Gastrocnemius medialis (tissue), 4 donors: ENCODE measurements at regions of chr5 and their contacts with region 1.

Region 1: DNA sequence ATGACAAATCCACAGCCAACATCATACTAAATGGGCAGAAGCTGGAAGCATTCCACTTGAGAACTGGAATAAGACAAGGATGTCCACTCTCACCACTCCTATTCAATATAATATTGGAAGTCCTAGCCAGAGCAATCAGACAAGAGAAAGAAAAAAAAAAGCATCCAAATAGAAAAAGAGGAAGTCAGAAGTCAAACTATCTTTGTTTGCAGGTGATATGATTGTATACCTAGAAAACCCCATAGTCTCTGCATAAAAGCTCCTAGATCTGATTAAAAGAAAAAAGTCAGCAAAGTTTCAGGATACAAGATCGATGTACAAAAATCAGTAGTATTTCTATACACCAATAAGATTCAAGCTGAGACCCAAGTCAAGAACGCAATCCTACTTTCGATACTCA is 66.1 kb downstream of the OSMR start:
- DNase-seq: no peak
- ATAC-seq: no peak
- H3K4me3 ChIP-seq: no peak overlapping the region
- H3K27ac ChIP-seq: no peak overlapping the region
- H3K4me1 ChIP-seq: no peaks in the 10 kb centered on the region
- H3K27me3 ChIP-seq: no peaks in the 10 kb centered on the region
- CTCF ChIP-seq: no peak
- POLR2A ChIP-seq: no peak

Region 2: GRCh38 chr5:38889424-38889823 is 22.5 kb before region 1 on chr5:
- in situ Hi-C with region 1: no loop called
- intact Hi-C with region 1: loop called (anchors 1 kb)
- DNase-seq: no peak
- ATAC-seq: no peak
- H3K4me3 ChIP-seq: no peak overlapping the region
- H3K27ac ChIP-seq: no peak overlapping the region
- H3K4me1 ChIP-seq: no peaks in the 10 kb centered on the region
- H3K27me3 ChIP-seq: no peaks in the 10 kb centered on the region
- CTCF ChIP-seq: no peak
- POLR2A ChIP-seq: no peak